Activated CD8-positive, alpha-beta memory T cell treated with anti-CD3 and anti-CD28 coated beads, Interleukin-2, amount 10 ng/mL, durations not matched to agents 7 days and 5 days (primary cell): ENCODE measurements at regions of chr2 and their contacts with region 1.

Region 1: DNA sequence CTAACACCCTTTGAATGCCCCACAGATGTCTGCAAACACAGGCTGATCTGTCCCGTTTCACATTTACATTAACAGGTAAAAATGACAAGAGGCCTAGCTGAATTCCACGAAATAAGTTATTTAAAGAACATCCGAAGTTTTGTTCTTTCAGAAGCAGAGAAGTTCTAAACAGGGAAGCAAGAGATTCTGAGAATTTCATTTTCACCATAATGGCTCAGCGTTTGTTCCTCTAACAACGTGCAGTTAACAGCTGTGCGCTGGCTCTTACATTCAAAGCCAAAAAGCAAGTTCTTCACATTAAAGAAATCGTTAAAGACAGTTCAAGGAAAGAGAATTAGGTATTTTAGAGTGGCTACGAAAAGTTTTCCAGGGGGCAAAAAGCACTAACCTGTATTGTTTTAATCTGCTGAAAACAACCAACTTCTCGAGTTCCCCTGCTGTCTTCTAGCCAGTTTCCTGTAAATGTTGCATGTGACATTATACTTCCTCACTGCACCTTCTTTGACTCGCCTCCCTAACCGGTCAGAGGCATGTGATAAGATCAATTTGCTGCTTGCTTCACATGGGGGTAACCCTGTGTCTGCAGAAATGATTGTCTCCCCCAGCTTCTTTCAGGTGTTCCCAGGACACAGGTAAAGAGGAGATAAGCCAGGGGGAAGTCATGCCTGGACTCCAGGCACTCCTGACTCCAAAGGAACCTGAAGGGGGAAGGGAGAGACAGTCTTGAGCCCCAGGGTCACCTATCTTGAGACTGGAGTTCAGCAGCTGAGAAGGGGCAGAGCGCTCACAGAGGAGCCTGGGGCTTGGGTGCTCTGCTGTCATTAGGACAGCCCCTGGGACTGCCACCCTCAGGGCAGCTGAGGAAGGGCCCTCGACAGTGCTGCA is 36.8 kb upstream of the WIPF1 start:
- DNase-seq: peak; percentile 80
- ATAC-seq: peak; percentile 76
- H3K4me3 Mint-ChIP-seq: peak overlapping the region; percentile 99
- H3K27ac Mint-ChIP-seq: peak overlapping the region; percentile 100
- H3K4me1 Mint-ChIP-seq: peaks cover 69% of the 10 kb centered on the region
- H3K27me3 Mint-ChIP-seq: no peaks in the 10 kb centered on the region

Region 2: DNA sequence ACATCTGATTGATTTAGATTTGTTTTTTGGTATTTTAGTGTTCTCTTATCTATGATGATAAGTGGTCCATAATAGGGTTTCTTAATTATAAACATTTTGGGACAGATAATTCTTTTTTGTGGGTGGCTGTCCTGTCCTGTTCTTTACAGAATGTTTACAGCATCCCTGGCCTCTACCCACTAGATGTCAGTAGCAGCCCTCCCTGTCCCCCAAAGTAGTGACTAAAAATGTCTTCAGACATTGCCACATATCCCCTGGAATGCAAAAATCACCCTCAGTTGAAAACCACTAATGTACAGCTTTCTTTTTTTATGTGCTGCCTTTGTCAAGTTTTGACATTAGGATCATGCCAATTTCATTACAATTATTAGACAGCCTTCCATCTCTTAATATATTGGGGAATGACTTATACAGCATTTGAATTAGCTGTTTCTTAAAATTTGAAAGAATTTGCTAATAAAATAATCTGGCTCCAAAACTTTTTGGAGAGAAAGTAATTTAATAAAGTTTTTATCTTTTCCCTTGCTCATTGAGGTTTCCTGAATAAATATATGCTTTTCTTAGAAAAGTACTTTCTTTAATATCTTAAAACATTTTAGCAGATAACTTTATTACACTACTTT is 56.3 kb before region 1 on chr2:
- CTCF ChIA-PET with region 1: interaction called, 10 read pairs
- DNase-seq: peak; percentile 74
- ATAC-seq: peak; percentile 65
- H3K4me3 Mint-ChIP-seq: no peak overlapping the region
- H3K27ac Mint-ChIP-seq: peak overlapping the region; percentile 26
- H3K4me1 Mint-ChIP-seq: peaks cover 76% of the 10 kb centered on the region
- H3K27me3 Mint-ChIP-seq: no peaks in the 10 kb centered on the region

Region 3: GRCh38 chr2:174593574-174594203 is 40.7 kb before region 1 on chr2:
- CTCF ChIA-PET with region 1: interaction called, 70 read pairs
- DNase-seq: peak; percentile 88
- ATAC-seq: peak; percentile 74
- H3K4me3 Mint-ChIP-seq: peak overlapping the region; percentile 91
- H3K27ac Mint-ChIP-seq: peak overlapping the region; percentile 95
- H3K4me1 Mint-ChIP-seq: peaks cover 48% of the 10 kb centered on the region
- H3K27me3 Mint-ChIP-seq: no peaks in the 10 kb centered on the region

Region 4: DNA sequence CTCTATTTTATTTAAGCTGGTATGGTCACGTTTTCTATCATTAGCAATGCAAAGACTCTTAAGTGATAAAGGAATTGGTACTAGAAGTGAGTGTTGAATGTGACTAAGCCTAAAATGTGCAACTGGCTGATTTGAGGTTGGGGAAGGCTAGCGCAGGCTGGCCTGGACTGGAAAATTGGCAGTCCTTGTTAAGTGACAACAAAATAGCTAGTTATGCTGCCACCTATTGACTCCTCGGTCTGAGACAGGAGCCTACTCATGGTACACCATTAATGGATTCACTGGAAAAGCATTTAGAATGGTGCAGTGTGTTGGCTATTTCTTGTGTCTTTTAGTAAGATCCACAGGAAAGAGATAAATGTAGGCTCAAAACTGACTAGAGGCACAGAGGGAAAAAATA is 31.1 kb before region 1 on chr2:
- CTCF ChIA-PET with region 1: interaction called, 70 read pairs
- DNase-seq: peak; percentile 74
- ATAC-seq: peak; percentile 70
- H3K4me3 Mint-ChIP-seq: no peak overlapping the region
- H3K27ac Mint-ChIP-seq: peak overlapping the region; percentile 66
- H3K4me1 Mint-ChIP-seq: peaks cover 89% of the 10 kb centered on the region
- H3K27me3 Mint-ChIP-seq: no peaks in the 10 kb centered on the region

Region 5: DNA sequence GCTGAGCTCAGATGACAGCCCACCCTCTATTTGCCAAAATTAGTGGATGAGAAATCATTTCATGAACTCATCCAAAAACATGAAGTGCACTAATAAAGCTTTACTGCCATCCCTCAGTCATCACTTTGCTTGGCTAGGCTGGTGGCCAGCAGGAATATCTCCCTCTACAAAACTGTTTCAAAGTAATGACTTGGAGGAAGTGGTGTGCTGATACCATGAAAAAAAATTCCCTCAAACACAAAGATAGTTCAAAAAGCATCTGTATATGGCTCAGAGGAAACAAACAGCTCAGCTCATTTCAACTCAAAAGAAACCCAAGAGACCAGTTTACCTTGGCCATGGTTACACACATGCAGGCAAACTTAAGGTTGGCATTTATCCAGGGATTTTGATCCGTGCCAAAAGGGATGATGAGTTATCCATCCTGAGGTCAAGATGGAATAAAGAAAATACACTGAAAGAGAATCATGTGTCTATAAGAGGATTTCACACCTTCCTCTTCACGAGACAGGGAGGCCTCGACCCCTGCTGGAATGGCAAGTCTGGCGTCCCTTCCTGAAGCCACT is 18.4 kb before region 1 on chr2:
- CTCF ChIA-PET with region 1: interaction called, 51 read pairs
- DNase-seq: peak; percentile 50
- ATAC-seq: peak; percentile 29
- H3K4me3 Mint-ChIP-seq: peak overlapping the region; percentile 9
- H3K27ac Mint-ChIP-seq: peak overlapping the region; percentile 78
- H3K4me1 Mint-ChIP-seq: peaks cover 87% of the 10 kb centered on the region
- H3K27me3 Mint-ChIP-seq: no peaks in the 10 kb centered on the region

Region 6: DNA sequence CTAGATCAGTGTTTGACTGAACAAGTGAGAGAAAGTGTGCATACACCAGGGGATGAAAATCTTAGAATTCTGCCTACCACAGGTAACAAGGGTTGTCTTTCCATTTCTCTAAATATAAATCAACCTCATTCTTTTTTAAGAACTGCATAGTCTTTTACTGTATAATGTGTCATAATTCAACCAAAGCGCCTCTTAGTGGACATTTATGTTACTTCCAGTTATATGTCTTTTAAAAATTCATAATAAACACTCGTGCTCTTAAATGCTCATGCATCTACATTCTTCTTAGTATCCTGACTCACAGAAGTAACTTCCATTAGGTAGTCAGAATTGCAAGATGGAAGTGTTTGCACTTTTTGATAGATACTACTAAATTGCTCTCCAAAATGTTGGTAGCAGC is 53.7 kb after region 1 on chr2:
- CTCF ChIA-PET with region 1: interaction called, 34 read pairs
- DNase-seq: no peak
- ATAC-seq: peak; percentile 54
- H3K4me3 Mint-ChIP-seq: no peak overlapping the region
- H3K27ac Mint-ChIP-seq: no peak overlapping the region
- H3K4me1 Mint-ChIP-seq: peaks cover 38% of the 10 kb centered on the region
- H3K27me3 Mint-ChIP-seq: no peaks in the 10 kb centered on the region

Region 7: DNA sequence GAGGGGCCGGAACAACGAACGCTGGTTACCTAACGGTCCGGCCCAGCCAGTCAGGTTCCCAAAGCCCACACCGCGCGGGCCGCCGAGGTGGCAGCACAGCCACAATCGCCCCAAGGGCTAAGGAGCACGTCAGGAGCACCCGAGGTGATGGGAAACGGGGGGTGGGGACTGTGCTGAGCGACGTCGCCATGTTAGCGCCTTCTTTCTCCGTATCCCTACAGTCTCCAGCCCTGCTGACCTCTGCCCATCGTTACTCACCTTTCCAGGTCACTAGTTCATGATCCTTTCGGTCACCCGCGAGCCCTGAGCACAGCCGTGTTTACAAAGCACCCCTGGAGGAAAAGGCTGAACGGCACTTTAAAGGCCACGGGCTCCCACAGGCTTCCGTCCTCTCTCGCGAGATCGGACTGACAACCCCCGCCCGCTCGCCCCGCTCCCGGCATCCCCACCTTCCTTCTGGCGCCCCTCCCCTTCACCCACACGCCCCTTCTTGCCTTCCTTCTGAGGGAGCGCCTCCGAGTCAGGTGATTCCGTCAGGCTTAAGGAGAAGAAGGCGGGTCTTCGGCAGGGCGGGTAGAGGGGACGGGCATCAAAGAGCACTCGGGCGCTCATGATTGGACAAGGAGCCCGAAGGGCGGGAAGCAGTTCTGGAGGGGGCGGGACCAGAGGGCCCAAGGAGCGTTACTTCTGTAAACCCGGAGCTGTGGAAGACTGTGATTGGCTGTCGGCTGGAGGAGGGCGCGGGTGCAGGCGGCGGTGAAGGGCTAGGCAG is 533.6 kb after region 1 on chr2 and contains the start of gene ATF2:
- CTCF ChIA-PET with region 1: no interaction called
- DNase-seq: peak; percentile 99
- ATAC-seq: peak; percentile 93
- H3K4me3 Mint-ChIP-seq: peak within 1 kb of the TSS; percentile 93
- H3K27ac Mint-ChIP-seq: peak within 1 kb of the TSS; percentile 95
- H3K4me1 Mint-ChIP-seq: peaks cover 48% of the 10 kb centered on the region
- H3K27me3 Mint-ChIP-seq: no peaks in the 10 kb centered on the region
- total RNA-seq, gene ATF2: 58.4 to 62.4 TPM